HepG2 (cell line): ENCODE measurements at regions of chr3 and their contacts with region 1.

Region 1: DNA sequence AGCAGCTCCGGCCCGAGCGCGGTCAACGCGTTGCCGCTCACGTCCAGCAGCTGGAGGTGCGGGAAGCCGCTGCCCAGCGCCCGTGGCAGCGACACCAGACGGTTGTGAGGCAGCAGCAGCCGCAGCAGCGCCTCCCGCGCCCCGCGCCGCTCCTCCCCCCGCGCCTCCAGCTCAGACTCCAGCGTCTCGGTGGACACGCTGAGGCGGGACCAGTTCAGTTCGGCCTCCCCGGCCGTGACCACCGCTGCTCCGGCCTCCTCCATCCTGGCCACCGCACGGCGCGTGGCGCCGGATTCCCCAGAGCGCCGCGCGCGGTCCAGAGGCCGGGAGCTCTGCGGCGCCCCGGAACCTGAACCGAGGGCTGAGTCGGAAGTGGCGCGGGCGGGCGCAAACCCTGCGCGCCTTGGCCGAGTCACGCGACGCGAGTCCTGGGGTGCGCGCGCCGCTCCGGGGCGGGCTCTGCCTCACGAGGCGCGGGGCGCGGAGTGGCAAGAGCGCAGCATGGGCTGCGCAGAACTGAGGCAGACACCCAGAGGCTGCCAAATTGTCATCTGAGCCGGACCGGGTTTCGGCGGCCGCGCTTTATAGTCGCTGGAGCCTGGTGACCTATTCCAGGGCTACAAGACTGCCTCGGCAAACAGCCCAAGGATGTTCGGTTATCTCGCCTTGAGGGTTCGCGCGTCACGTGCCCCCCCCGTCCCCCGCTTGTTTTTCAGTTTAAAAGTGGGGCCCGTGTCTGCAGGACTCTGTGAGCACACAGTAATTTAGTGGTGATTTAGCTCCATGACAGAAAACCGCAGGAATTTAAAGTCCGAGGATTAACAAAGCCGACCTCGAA is at the start of gene LRRC58:
- DNase-seq: peak; percentile 81
- ATAC-seq: peak; percentile 91
- H3K4me3 ChIP-seq: peak within 1 kb of the TSS; percentile 68 to 95 (median 87)
- H3K27ac ChIP-seq: peak within 1 kb of the TSS; percentile 81
- H3K4me1 ChIP-seq: peaks cover 45% of the 10 kb centered on the region
- H3K27me3 ChIP-seq: peaks cover 0 to 7% of the 10 kb centered on the region in 2 experiments; a peak in 2 of 5 replicates
- CTCF ChIP-seq: peak; percentile 66
- EP300 ChIP-seq: no peak
- POLR2A ChIP-seq: peak; percentile 74 to 80; a peak in 3 of 4 replicates
- RAD21 ChIP-seq: peak; percentile 54; the same call in 1 of the 2 replicates
- total RNA-seq, gene LRRC58: 17.3 and 28.8 TPM in 2 replicates

Region 2: GRCh38 chr3:120245386-120245785 is 103.8 kb before region 1 on chr3:
- CTCF ChIA-PET with region 1: no interaction called
- POLR2A ChIA-PET with region 1: no interaction called
- in situ Hi-C with region 1: no loop called
- intact Hi-C with region 1: loop called (anchors 10 kb)
- DNase-seq: no peak
- ATAC-seq: no peak
- H3K4me3 ChIP-seq: no peak overlapping the region
- H3K27ac ChIP-seq: no peak overlapping the region
- H3K4me1 ChIP-seq: no peaks in the 10 kb centered on the region
- H3K27me3 ChIP-seq: no peaks in the 10 kb centered on the region
- CTCF ChIP-seq: no peak
- EP300 ChIP-seq: no peak
- POLR2A ChIP-seq: no peak
- RAD21 ChIP-seq: no peak

Region 3: GRCh38 chr3:120274739-120275167 is 74.4 kb before region 1 on chr3:
- CTCF ChIA-PET with region 1: no interaction called
- POLR2A ChIA-PET with region 1: no interaction called
- in situ Hi-C with region 1: no loop called
- intact Hi-C with region 1: loop called (anchors 2 kb)
- DNase-seq: peak; percentile 80
- ATAC-seq: peak; percentile 99
- H3K4me3 ChIP-seq: no peak overlapping the region
- H3K27ac ChIP-seq: no peak overlapping the region
- H3K4me1 ChIP-seq: no peaks in the 10 kb centered on the region
- H3K27me3 ChIP-seq: peaks cover 2 to 7% of the 10 kb centered on the region in 2 experiments; a peak in 2 of 5 replicates
- CTCF ChIP-seq: no peak
- EP300 ChIP-seq: peak in 1 of 2 experiments; percentile 79; a peak in 2 of 4 replicates
- POLR2A ChIP-seq: no peak
- RAD21 ChIP-seq: no peak

Region 4: DNA sequence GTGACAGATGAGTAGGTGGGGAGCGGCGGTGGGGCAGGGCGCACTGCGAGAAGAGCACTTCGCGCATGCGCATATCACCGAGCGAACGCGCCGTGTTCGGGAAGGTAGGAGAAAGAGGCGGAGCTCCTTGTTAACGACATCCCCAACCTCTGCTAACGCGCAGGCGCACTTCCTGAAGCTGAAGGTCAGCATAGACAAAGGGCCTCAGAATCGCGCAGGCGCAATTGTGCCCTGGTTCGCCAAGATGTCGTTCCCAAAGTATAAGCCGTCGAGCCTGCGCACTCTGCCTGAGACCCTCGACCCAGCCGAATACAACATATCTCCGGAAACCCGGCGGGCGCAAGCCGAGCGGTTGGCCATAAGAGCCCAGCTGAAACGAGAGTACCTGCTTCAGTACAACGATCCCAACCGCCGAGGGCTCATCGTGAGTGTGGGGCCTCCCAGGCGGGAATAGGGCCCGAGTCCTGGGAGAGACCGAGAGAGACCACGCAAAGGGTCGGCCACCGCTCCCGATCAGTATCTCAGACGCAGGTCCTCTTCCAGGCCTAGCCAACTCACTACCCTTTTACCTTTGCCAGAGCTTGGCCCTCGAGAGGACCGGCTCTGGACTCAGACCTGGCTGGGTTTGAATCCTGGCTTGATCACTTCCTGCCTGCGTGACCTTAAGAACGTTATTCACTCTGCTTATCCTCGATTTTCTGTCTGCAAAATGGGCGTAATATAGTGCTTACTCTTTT is 247.1 kb after region 1 on chr3 and contains the start of gene NDUFB4:
- CTCF ChIA-PET with region 1: no interaction called
- POLR2A ChIA-PET with region 1: interaction called, 11 read pairs
- in situ Hi-C with region 1: no loop called
- intact Hi-C with region 1: no loop called
- DNase-seq: peak; percentile 98
- ATAC-seq: peak; percentile 97
- H3K4me3 ChIP-seq: peak within 1 kb of the TSS; percentile 77 to 100 (median 97)
- H3K27ac ChIP-seq: peak within 1 kb of the TSS; percentile 83
- H3K4me1 ChIP-seq: peaks cover 37% of the 10 kb centered on the region
- H3K27me3 ChIP-seq: peaks cover 0 to 3% of the 10 kb centered on the region in 2 experiments; a peak in 1 of 5 replicates
- CTCF ChIP-seq: no peak
- EP300 ChIP-seq: no peak
- POLR2A ChIP-seq: peak; percentile 81 to 88
- RAD21 ChIP-seq: no peak
- total RNA-seq, gene NDUFB4: 115 and 117 TPM in 2 replicates

Region 5: GRCh38 chr3:120763601-120764000 is 414.4 kb after region 1 on chr3:
- CTCF ChIA-PET with region 1: no interaction called
- POLR2A ChIA-PET with region 1: no interaction called
- in situ Hi-C with region 1: no loop called
- intact Hi-C with region 1: no loop called
- DNase-seq: no peak
- ATAC-seq: no peak
- H3K4me3 ChIP-seq: no peak overlapping the region
- H3K27ac ChIP-seq: no peak overlapping the region
- H3K4me1 ChIP-seq: peaks cover 20% of the 10 kb centered on the region
- H3K27me3 ChIP-seq: no peaks in the 10 kb centered on the region
- CTCF ChIP-seq: no peak
- EP300 ChIP-seq: no peak
- POLR2A ChIP-seq: no peak
- RAD21 ChIP-seq: no peak